Mammary epithelial cell (primary cell): ENCODE measurements at regions of chr1 and their contacts with region 1.

Region 1: DNA sequence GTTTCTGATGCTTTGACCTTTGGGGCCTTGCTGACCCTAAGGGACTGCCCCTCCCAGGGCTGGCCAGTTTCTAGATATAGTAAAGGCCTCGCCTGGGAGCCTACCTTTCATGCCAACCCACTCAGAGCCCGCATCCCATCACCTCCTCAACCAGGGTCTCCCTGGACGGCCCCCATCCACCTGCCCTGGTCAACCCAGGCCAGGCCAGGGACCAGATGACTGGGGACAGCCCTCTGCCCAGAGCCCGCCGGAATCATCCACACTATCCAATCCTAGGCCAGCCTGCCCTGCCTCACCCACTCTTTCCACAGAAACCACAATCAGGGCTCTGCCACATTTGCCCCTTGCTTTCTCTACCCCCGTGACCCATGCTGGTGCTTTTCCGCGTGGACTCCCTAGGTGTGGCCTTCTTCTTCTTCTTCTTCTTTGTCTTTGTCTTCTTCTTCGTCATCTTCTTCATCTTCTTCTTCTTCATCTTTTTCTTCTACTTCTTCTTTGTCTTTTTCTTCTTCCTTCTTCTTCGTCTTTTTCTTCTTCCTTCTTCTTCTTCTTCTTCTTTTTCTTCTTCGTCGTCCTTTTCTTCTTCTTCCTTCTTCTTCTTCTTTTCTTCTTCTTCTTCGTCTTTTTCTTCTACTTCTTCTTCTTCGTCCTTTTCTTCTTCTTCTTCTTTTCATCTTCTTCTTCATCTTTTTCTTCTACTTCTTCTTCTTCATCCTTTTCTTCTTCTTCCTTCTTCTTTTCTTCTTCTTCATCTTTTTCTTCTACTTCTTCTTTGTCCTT is 11.5 kb upstream of the H6PD start:
- DNase-seq: no peak
- H3K4me3 ChIP-seq: no peak overlapping the region
- H3K27ac ChIP-seq: no peak overlapping the region
- H3K4me1 ChIP-seq: no peaks in the 10 kb centered on the region
- H3K27me3 ChIP-seq: no peaks in the 10 kb centered on the region
- CTCF ChIP-seq: no peak

Region 2: DNA sequence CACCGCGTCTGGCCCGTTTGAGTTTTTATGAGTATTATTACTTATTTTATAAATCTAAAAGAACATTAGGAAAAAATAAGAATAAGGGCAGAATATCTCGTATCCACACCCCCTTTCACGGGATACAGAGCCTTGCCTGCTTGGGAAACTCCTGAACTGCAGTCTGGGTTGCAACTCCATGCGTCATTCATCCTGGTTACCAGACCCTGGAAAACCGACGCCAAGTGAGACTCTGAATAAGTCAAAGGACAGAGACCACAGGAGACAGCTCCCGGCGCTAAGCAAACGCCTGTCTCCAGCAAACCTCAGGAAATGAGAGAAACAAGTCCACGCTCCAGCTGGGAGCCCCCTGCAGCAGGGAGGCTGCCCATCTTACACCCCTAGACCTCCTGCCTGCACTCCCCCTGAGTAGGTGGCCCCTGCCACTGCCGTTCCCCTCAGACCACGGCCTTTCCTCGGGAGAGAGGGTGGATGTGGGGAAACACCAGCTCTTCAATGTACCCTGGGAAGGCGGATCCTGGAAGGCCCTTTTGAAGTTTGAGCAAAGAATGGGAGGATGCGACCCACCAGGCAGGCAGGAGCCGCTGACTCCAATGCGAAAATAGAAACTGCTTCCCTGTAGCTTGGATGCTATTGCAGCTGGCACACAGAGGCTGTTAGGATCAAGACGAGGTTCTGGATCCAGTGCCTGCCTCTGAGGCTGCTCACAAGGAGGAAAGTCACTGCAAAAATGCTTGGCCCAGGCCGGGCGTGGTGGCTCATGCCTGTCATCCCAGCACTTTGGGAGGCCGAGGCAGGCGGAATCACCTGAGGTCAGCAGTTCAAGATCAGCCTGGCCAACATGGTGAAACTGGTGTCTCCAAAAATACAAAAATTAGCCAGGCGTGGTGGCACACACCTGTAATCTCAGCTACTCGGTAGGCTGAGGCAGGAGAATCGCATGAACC is 56.5 kb before region 1 on chr1:
- CTCF ChIA-PET with region 1: no interaction called
- dilution Hi-C with region 1: no loop called
- in situ Hi-C with region 1: no loop called
- intact Hi-C with region 1: no loop called
- DNase-seq: no peak
- H3K4me3 ChIP-seq: no peak overlapping the region
- H3K27ac ChIP-seq: no peak overlapping the region
- H3K4me1 ChIP-seq: peaks cover 24% of the 10 kb centered on the region
- H3K27me3 ChIP-seq: no peaks in the 10 kb centered on the region
- CTCF ChIP-seq: no peak

Region 3: GRCh38 chr1:9181176-9181906 is 41.7 kb before region 1 on chr1:
- CTCF ChIA-PET with region 1: no interaction called
- dilution Hi-C with region 1: loop called (anchors 5 kb)
- in situ Hi-C with region 1: no loop called
- intact Hi-C with region 1: no loop called
- DNase-seq: peak; percentile 52
- H3K4me3 ChIP-seq: peak overlapping the region; percentile 92 to 98 (median 94)
- H3K27ac ChIP-seq: peak overlapping the region; percentile 91
- H3K4me1 ChIP-seq: peaks cover 27% of the 10 kb centered on the region
- H3K27me3 ChIP-seq: no peaks in the 10 kb centered on the region
- CTCF ChIP-seq: peak; percentile 84 to 96

Region 4: DNA sequence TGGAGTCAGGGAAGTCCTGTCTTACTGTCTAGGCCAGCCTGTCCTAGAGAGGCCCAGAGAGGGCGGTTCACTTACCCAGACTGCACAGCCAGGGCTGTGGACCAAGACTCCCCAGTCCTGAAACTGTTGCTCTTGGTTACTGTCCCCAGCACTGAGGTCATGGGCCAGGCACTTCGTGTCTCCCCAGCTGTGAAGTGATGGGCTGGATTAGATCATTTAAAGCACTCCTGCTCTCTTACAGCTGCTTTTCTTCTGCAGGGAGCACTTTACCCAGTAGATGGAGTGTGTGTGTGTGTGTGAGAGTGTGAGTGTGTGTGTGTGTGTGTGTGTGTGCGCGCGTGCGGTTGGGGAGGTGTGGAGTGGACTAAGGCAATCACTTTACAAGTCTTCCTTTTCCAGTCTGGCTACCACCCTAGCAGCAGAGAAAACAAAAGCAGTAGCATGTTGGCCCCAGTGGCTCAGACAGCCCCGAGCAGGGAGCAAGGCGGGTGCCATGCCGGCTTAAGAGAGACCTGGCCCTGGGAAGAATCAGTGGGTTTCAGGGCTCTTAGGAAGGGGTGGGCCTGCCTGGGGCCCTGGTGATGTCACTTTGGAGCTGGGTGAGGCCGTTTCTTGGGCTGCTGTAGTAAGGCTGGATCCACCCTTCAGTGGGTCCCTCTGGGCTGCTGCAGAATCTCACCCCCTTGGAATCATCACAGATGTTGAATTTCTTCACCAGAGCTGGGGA is 72.0 kb after region 1 on chr1:
- CTCF ChIA-PET with region 1: no interaction called
- dilution Hi-C with region 1: no loop called
- in situ Hi-C with region 1: no loop called
- intact Hi-C with region 1: no loop called
- DNase-seq: peak; percentile 29
- H3K4me3 ChIP-seq: peak overlapping the region in 1 of 3 experiments; percentile 96
- H3K27ac ChIP-seq: peak overlapping the region; percentile 63
- H3K4me1 ChIP-seq: peaks cover 36% of the 10 kb centered on the region
- H3K27me3 ChIP-seq: no peaks in the 10 kb centered on the region
- CTCF ChIP-seq: peak in 1 of 2 donors; percentile 7

Region 5: GRCh38 chr1:9809100-9809510 is 586.1 kb after region 1 on chr1:
- CTCF ChIA-PET with region 1: no interaction called
- dilution Hi-C with region 1: no loop called
- in situ Hi-C with region 1: no loop called
- intact Hi-C with region 1: no loop called
- DNase-seq: peak; percentile 29
- H3K4me3 ChIP-seq: no peak overlapping the region
- H3K27ac ChIP-seq: peak overlapping the region; percentile 1
- H3K4me1 ChIP-seq: peaks cover 16% of the 10 kb centered on the region
- H3K27me3 ChIP-seq: no peaks in the 10 kb centered on the region
- CTCF ChIP-seq: no peak